ENCODE measurements at regions of chr7 and their contacts with region 1.

Region 1: DNA sequence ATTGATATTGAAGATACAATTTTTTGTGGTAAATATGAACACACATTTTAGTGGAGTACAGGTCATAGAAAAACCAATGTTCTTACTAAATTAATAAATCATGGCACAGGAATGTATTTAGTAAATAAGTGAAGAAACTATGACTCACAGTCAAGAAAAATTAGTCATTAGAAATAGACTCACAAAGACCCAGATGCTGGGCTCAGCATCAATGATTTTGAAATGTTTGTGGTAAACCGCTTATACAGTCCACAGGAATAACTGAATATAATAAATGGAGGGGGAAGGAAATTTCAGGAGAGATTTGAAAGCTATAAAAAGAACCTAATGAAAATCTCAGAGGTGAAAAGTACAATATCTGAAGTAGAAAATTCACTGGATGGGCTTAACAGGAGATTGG is 138.3 kb upstream of the ADCY1 start:
- DNase-seq: no peak
- H3K4me3 ChIP-seq: no peak overlapping the region
- H3K27ac ChIP-seq: no peak overlapping the region
- H3K4me1 ChIP-seq: no peaks in the 10 kb centered on the region
- H3K27me3 ChIP-seq: no peaks in the 10 kb centered on the region
- CTCF ChIP-seq: no peak
- EP300 ChIP-seq: no peak
- POLR2A ChIP-seq: no peak

Region 2: DNA sequence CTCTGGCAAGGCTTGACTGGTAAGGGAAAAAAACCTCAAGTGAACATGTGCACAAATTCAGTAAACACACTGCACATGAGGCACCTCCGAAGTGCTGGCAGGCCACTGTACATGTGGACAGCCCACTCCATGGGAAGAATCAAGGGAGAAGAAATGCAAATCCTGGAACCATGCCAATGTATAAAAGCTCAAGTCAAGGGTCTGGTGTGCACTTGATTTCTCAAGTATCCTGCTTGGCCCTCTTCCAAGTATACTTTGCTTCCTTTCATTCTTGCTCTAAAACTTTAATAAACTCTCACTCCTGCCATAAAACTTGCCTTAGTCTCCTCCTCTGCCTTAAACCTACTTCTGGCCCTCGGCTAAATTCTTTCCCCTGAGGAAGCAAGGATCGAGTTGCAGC is 111.1 kb before region 1 on chr7:
- intact Hi-C with region 1: no loop called
- DNase-seq: no peak
- H3K4me3 ChIP-seq: no peak overlapping the region
- H3K27ac ChIP-seq: no peak overlapping the region
- H3K4me1 ChIP-seq: no peaks in the 10 kb centered on the region
- H3K27me3 ChIP-seq: no peaks in the 10 kb centered on the region
- CTCF ChIP-seq: no peak
- EP300 ChIP-seq: no peak
- POLR2A ChIP-seq: no peak

Region 3: GRCh38 chr7:45456747-45457515 is 21.1 kb after region 1 on chr7:
- intact Hi-C with region 1: loop called in 1 of 4 experiments (anchors 2 kb)
- DNase-seq: no peak
- H3K4me3 ChIP-seq: no peak overlapping the region
- H3K27ac ChIP-seq: no peak overlapping the region
- H3K4me1 ChIP-seq: no peaks in the 10 kb centered on the region
- H3K27me3 ChIP-seq: no peaks in the 10 kb centered on the region
- CTCF ChIP-seq: no peak
- EP300 ChIP-seq: no peak
- POLR2A ChIP-seq: no peak

Region 4: GRCh38 chr7:45469103-45469502 is 33.3 kb after region 1 on chr7:
- intact Hi-C with region 1: loop called in 1 of 4 experiments (anchors 2 kb)
- DNase-seq: no peak
- H3K4me3 ChIP-seq: no peak overlapping the region
- H3K27ac ChIP-seq: no peak overlapping the region
- H3K4me1 ChIP-seq: no peaks in the 10 kb centered on the region
- H3K27me3 ChIP-seq: no peaks in the 10 kb centered on the region
- CTCF ChIP-seq: no peak
- EP300 ChIP-seq: no peak
- POLR2A ChIP-seq: no peak

Region 5: DNA sequence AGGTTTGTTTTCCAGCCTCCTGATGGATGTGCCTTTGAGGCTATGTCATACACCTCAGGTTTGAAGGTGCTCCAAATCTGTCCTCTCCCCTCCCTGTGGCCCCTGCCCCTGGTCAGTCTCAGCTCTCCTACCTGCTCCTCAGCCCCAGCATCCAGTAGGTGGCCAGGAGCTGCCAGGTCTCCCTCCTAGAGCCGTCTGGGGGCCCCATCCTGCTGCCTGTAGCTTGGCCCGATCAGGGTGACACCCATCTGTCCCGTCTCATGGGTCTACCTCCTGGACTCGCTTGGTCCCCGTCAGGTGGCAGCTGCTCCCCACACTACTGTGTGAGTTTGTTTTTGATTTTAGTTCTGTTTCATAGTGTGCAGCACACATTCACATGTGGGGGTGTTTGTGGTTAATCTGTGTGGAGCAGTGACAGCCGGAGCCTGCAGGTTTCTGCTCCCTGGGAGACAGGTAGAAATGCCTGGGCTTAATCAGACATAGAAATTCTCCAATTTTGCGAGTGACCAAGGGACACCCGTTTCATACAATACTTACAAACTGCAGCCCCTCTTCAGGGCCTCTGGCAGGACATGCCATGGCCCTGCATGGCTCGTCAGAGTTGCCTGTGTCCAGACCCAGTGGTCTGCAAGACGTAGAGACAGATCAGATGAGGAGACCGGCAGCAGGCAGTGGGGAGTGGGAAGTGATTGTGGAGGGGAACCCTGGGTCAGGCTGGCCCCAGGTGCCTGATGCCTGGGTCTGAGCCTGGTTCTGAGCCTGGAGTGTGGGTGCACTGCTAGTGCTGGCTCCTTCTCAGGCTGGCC is 155.5 kb after region 1 on chr7:
- intact Hi-C with region 1: no loop called
- DNase-seq: peak in 1 of 5 donors; percentile 2
- H3K4me3 ChIP-seq: no peak overlapping the region
- H3K27ac ChIP-seq: no peak overlapping the region
- H3K4me1 ChIP-seq: no peaks in the 10 kb centered on the region
- H3K27me3 ChIP-seq: no peaks in the 10 kb centered on the region
- CTCF ChIP-seq: no peak
- EP300 ChIP-seq: no peak
- POLR2A ChIP-seq: no peak